ENCODE measurements at regions of chr20 and their contacts with region 1.

Region 1: GRCh38 chr20:15288106-15288505 is 950.7 kb upstream of the FLRT3 start:
- DNase-seq: no peak
- ATAC-seq: no peak
- H3K4me3 ChIP-seq: no peak overlapping the region
- H3K4me3 Mint-ChIP-seq: no peak overlapping the region
- H3K27ac ChIP-seq: no peak overlapping the region
- H3K27ac Mint-ChIP-seq: no peak overlapping the region
- H3K4me1 ChIP-seq: no peaks in the 10 kb centered on the region
- H3K4me1 Mint-ChIP-seq: no peaks in the 10 kb centered on the region
- H3K27me3 ChIP-seq: no peaks in the 10 kb centered on the region
- H3K27me3 Mint-ChIP-seq: no peaks in the 10 kb centered on the region
- CTCF ChIP-seq: no peak

Region 2: DNA sequence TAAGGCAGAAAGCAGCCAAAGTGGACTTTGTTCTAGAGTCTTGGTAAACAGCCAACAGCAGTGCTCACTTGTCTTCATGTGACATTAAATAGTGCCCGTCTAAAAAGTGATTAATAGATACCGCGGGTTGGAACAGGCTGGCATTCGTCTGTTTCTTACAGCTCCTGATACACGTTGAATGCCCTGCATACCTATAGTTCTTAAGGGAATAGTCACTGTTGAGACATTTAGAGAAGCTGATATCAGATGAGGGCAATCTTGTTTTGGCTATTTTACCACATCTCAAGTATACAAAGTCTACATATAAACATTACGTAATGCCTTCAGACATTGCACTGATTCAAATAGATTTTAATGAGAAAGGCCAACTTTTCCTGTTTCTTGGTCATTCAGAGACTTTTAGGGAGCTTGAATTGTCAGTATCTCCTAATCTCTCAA is 575.8 kb before region 1 on chr20:
- CTCF ChIA-PET with region 1: no interaction called
- POLR2A ChIA-PET with region 1: no interaction called
- intact Hi-C with region 1: loop called in 1 of 2 experiments (anchors 5 kb)
- DNase-seq: no peak
- ATAC-seq: no peak
- H3K4me3 ChIP-seq: no peak overlapping the region
- H3K4me3 Mint-ChIP-seq: no peak overlapping the region
- H3K27ac ChIP-seq: no peak overlapping the region
- H3K27ac Mint-ChIP-seq: no peak overlapping the region
- H3K4me1 ChIP-seq: no peaks in the 10 kb centered on the region
- H3K4me1 Mint-ChIP-seq: no peaks in the 10 kb centered on the region
- H3K27me3 ChIP-seq: no peaks in the 10 kb centered on the region
- H3K27me3 Mint-ChIP-seq: no peaks in the 10 kb centered on the region
- CTCF ChIP-seq: no peak

Measured in CD8-positive, alpha-beta T cell (primary cell).